ENCODE measurements at regions of chr10 and their contacts with region 1.

Region 1: DNA sequence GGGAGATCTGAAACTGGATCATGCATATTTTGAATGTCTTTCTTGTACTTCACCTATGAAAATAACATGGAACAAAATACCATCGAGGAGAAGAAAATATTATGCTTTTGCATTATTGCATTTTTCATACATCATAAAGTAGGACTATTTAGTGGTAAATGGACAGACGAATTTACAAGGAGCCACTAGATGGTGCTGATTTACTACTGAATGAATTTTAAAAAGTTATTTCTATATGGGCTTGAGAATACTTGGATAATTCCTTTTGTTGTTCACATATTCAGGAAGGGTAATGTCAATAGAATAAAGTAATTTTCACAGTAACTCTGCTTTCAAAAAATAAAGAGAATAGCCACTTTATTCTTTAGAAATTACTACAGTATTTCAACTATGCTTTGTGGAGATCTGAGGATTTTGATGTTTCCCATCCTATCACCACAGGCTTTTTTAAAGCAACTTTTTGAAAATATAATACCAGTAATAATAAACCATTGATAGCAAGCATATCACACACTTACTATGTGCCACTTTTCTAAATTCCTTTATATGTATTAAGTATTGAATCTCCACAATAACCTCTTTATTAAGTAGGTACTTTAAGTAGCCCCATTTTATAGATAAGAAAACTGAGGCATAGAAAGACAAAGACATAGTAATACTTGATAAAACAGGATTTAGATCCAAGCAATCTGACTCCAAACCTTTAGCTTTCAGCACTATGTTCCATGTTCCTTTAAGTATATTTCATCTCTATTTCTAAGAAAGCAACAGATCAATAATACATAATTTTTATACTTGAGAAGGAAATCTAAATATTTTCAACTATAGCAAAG is 38.6 kb downstream of the NEBL start:
- DNase-seq: no peak
- H3K4me3 ChIP-seq: no peak overlapping the region
- H3K27ac ChIP-seq: no peak overlapping the region
- H3K4me1 ChIP-seq: no peaks in the 10 kb centered on the region
- H3K27me3 ChIP-seq: no peaks in the 10 kb centered on the region
- CTCF ChIP-seq: peak; percentile 24 to 41 (median 31)
- EP300 ChIP-seq: no peak
- POLR2A ChIP-seq: no peak

Region 2: DNA sequence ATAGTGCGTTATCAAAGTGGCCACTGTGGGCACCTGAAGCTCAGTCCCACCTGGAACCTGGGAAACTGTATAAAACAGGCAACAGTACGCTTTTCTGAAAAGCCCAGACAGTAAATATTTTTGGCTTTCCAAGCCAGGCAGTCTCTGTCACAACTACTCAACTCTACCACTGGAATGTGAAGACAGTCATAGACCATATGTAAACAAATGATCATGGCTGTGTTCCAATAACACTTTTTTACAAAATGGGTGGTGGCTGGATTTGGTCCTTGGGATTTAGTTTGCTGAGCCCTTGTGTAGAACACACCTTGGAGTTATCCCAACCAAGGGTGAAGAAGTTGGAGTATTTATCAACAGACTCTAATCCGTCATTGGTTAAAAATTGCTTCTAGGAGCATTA is 407.1 kb after region 1 on chr10:
- in situ Hi-C with region 1: loop called in 3 of 4 experiments (anchors 25 kb)
- intact Hi-C with region 1: no loop called
- DNase-seq: no peak
- H3K4me3 ChIP-seq: no peak overlapping the region
- H3K27ac ChIP-seq: no peak overlapping the region
- H3K4me1 ChIP-seq: no peaks in the 10 kb centered on the region
- H3K27me3 ChIP-seq: no peaks in the 10 kb centered on the region
- CTCF ChIP-seq: no peak
- EP300 ChIP-seq: no peak
- POLR2A ChIP-seq: no peak

Measured in transverse colon (tissue), 4 donors.